HEK293T (cell line): ENCODE measurements at regions of chr15 and their contacts with region 1.

Region 1: DNA sequence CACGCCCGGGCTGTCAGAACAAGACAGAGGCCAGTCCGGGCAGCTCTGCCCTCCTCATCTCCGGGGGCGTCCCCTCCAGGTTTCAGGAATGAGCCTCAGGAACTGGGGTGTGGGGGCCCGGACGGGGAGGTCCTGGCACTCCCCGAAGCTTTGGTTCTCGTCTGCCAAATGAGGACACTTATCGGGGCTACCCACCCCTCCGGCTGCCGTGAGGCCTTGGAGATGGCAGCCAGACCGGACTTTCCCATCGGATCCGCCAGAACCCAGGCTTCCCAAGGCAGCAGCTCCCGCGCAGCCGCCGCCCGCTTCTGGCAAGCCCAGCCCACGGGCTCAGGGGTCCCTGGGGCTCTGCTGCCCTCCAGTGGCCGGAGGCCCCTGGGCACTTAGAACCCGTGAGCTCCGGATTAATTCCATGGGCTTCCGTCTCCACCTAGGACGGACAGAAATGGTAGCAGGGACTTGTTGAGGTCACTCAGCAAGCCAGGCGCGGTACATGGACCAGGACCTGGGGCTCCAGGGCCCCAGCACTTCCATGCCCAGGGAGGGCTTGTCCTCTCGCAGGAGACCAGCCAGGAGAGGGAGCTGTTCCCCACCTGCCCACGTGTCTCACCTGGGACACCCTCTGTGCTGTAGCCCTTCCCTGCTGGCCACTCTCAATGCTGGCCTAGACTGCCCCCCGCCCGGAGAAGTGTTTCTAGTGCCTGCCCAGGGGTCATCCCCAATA is 89.4 kb downstream of the LINGO1 start:
- DNase-seq: peak; percentile 96

Region 2: GRCh38 chr15:77107531-77108355 is 435.6 kb before region 1 on chr15:
- CTCF ChIA-PET with region 1: interaction called, 14 read pairs
- POLR2A ChIA-PET with region 1: no interaction called
- DNase-seq: peak; percentile 77

Region 3: DNA sequence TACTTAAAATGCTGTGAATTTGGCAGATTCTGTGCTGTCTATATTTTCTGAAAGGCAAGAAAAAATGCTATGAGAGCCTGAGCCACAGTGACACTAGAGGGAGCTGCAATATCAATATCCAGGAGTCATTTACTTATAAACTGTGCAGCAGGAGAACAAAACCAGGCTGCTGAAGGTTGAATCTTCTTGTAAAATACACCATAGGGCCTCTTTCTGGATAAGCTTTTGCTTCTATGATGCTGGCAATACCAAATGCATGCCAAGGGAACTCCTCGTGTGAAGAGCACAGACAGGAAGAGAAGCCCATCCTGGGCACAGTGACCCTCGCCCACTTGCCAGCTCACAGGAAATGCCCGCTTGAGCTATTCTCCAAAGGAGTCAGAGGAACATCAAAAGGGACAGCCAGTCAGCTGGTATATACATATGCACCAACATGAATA is 424.4 kb before region 1 on chr15:
- CTCF ChIA-PET with region 1: interaction called, 27 read pairs
- POLR2A ChIA-PET with region 1: no interaction called
- DNase-seq: peak; percentile 65

Region 4: DNA sequence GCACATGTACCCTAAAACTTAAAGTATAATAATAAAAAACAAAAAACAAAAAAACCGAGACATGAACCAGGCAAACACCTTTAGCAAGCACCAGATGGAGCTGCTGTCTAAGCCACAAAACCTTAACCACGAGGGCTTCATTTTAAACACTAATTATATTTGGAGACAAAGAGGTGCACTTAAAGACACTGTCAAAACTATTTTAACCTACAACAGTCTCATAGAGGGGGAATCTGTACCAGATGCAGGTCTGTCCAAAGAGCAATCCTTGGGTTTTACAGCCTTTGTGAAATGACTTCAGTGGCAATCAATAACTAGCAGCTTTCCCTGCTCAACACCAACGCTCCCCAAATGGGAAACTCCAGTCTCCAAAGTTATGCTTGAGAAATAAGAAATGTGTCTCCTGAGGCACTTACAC is 356.7 kb before region 1 on chr15:
- CTCF ChIA-PET with region 1: interaction called, 14 read pairs
- POLR2A ChIA-PET with region 1: interaction called, 4 read pairs
- DNase-seq: peak; percentile 22

Region 5: DNA sequence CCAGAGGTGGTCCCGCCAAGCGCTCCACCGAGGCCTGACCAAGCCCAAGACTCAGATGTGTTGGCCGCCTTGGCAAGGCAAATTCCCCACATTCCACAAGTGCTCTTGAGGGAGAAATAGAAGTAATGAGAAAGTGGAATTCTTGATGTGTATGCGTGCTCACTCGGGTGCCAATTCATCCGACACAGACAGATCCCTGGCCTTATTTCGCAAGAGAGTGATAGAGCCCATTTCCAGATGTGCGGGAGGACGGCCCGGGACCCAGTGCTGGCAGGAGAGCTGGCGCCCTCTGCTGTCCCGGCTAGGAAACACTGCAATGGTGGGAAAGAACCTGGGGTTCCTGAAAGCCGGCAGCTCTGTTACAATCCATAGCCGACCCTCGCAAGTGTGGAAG is 46.6 kb before region 1 on chr15:
- CTCF ChIA-PET with region 1: interaction called, 12 read pairs
- POLR2A ChIA-PET with region 1: interaction called, 7 read pairs
- DNase-seq: peak; percentile 90

Region 6: DNA sequence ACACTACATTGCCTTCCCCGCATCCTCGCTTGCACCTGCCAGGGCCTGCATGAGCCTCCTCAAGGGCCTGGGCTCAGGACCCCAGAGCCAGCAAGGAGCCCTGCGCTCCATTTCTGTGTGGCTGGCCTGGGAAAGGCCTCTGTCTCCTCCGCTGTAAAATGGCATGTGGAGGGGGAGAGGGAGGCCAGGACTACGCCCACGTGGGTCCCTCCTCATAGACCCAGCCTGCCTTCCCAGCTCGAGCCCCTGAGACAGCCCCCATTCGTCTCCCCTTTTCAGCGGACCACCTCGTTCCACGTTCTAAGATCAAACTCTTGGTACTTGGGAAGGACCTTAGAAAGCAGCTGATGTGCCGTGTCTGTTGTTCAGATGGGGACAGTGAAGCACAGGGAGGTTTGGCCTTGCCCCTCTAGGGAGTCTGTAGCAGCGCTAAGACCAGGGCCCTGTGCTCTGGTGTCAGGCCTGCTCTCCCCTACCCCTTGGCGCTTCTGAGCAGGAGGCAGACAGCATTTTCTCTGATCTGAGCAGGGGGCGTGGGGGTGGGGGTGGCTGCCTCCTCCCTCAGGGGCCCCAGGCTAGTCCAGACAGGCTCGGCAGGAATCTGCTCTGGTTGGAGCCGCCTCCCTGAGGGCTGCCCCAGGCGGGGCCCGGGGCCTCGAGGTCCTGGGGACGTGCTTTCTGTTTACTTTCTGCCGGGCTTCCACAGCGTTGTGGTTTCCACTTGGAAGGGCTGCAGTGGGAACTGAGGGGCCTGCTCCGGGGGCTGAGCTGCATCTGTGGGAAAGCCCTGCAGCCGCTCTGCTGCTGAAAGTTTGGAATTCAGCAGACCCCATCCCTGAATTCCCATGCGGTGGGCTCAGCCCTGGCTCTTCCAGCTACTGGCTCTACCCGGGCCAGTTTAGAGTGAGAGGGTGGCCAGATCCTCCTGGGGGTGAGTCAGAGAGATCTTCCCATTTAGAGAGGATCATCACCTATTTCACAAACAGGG is 16.2 kb before region 1 on chr15:
- CTCF ChIA-PET with region 1: interaction called, 10 read pairs
- POLR2A ChIA-PET with region 1: interaction called, 10 read pairs
- DNase-seq: peak; percentile 59

Region 7: GRCh38 chr15:77577366-77577950 is 34.1 kb after region 1 on chr15:
- CTCF ChIA-PET with region 1: interaction called, 10 read pairs
- POLR2A ChIA-PET with region 1: interaction called, 3 read pairs
- DNase-seq: no peak